ENCODE measurements at regions of chr6 and their contacts with region 1.

Region 1: DNA sequence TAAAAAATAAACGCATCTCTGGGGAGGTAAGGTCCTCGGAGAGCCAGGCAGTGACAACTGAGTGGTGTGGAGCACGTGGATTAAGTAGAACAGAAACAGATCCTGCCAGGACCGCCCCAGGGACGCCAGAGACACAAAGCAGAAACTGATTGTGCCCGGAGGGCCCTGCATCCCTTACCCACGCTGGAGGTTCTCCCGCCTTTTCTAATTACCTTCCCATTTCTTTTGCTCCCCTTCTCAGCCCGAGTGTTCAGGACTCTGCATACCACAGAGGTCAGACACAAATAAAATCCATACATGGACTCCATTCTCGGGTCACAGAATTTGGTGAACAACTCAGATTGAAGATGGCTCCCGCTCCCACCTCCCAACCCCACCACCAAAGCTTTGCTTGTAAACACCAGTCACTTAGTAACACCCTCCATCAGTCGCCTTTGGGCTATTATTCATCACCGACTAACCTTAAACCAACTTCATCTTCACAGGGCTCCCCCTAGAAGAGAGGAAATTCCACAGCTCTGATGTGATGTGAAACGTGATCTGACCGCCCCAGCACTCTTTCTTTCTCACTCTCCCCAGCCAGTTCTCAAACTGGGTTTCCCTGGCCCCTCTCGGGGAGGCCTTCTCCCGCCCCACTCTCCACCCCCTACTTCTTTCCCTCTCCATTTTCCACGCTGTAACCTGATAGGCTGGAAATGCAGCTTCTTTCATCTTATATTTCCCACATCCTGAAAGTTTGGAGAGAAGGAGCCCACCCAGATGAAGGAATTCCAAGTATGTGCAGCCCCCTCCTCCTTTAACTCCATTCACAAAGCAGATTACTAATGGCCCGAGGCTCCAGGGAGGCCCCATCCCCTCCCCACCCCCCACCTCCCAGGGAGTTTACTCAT is 32.5 kb upstream of the PIM1 start:
- DNase-seq: peak; percentile 72
- H3K4me3 Mint-ChIP-seq: no peak overlapping the region
- H3K27ac Mint-ChIP-seq: peak overlapping the region; percentile 74
- H3K4me1 Mint-ChIP-seq: peaks cover 39% of the 10 kb centered on the region
- H3K27me3 Mint-ChIP-seq: no peaks in the 10 kb centered on the region

Region 2: DNA sequence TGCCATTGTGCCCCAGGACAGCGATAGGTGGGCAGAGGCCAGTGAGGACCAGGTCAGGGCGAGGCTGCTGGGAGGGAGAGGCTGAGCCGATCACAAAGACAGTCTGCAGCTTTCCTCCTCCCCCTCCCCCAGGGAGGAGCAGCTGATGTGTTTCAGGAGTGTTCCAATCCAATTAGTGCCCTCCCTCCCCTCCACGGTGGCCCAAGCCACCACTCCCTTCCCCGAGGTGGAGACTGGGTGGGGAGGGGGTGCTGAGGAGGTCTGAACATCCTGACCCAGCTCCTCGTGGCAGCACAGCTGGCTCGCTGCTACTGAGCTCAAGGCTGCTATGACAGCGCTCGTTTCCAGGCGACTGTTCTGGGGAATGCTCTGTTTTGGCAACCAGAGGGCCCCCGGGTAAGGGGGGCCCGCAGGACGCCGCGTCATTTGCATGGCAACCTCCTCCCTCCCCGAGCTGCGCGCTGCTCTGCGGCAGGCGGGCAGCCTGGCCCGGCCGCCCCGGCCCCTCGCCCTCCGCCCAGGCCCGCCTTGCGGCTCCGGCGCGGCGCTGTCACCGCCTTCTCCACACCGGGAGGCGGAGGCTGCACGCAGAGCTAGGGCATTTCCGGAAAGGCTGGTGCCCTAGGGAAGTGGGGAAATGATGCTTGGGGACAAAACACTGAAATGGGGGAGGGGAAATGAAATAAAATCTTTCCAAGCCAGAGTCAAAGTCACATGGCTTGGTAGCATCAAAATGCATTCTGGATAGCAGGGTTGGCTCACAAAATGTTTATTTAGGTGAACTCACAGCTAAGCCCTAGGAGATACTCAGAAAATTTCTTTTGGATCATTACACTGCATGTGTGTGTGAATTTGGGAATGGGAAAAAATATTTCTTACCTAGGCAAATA is 34.9 kb before region 1 on chr6:
- CTCF ChIA-PET with region 1: no interaction called
- intact Hi-C with region 1: loop called (anchors 5 kb)
- DNase-seq: peak; percentile 83
- H3K4me3 Mint-ChIP-seq: peak overlapping the region; percentile 58
- H3K27ac Mint-ChIP-seq: peak overlapping the region; percentile 65
- H3K4me1 Mint-ChIP-seq: peaks cover 23% of the 10 kb centered on the region
- H3K27me3 Mint-ChIP-seq: no peaks in the 10 kb centered on the region

Region 3: GRCh38 chr6:37155394-37156312 is 18.2 kb after region 1 on chr6:
- CTCF ChIA-PET with region 1: no interaction called
- intact Hi-C with region 1: loop called (anchors 1 kb)
- DNase-seq: peak; percentile 87
- H3K4me3 Mint-ChIP-seq: peak overlapping the region; percentile 39
- H3K27ac Mint-ChIP-seq: peak overlapping the region; percentile 90
- H3K4me1 Mint-ChIP-seq: peaks cover 32% of the 10 kb centered on the region
- H3K27me3 Mint-ChIP-seq: no peaks in the 10 kb centered on the region

Region 4: DNA sequence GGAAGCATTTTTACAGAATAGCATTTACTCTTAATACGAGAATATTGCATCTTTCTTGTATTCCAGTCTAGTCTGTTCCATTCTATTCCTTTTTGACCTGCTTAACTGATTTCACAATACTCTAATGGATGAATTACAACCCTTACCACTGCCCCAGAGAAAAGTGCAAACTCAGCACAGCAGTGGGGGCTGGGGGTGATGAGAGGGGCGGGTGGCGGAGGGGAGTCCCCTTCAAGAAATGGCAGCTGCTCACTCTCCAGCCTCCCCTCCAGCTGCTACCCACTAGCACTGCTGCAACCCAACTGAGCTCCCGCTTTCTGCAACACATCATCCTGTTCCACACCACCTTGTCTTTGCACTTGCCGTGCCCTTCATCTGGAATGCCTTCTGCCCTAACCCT is 62.6 kb after region 1 on chr6:
- CTCF ChIA-PET with region 1: no interaction called
- intact Hi-C with region 1: no loop called
- DNase-seq: no peak
- H3K4me3 Mint-ChIP-seq: no peak overlapping the region
- H3K27ac Mint-ChIP-seq: no peak overlapping the region
- H3K4me1 Mint-ChIP-seq: peaks cover 36% of the 10 kb centered on the region
- H3K27me3 Mint-ChIP-seq: no peaks in the 10 kb centered on the region